ENCODE measurements at regions of chr16 and their contacts with region 1.

Region 1: DNA sequence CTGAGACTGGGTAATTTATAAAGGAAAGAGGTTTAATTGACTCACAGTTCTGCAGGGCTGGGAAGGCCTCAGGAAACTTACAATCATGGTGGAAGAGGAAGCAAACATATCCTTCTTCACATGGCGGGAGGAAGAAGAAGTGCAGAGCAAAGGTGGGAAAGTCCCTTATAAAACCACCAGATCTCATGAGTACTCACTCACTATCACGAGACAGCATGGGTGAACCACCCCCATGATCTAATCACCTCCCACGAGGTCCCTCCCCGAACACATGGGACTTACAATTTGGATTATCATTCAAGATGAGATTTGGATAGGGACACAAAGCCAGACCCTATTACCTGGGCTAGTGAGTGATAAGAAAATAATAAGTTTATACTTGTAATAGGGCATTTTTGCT is 70.6 kb upstream of the HS3ST2 start:
- DNase-seq: no peak
- ATAC-seq: no peak
- H3K4me3 ChIP-seq: no peak overlapping the region
- H3K4me1 ChIP-seq: no peaks in the 10 kb centered on the region
- CTCF ChIP-seq: no peak

Region 2: GRCh38 chr16:22797551-22797950 is 54.1 kb after region 1 on chr16:
- intact Hi-C with region 1: loop called in 1 of 2 experiments (anchors 10 kb)
- DNase-seq: no peak
- ATAC-seq: no peak
- H3K4me3 ChIP-seq: no peak overlapping the region
- H3K4me1 ChIP-seq: no peaks in the 10 kb centered on the region
- CTCF ChIP-seq: no peak

Region 3: DNA sequence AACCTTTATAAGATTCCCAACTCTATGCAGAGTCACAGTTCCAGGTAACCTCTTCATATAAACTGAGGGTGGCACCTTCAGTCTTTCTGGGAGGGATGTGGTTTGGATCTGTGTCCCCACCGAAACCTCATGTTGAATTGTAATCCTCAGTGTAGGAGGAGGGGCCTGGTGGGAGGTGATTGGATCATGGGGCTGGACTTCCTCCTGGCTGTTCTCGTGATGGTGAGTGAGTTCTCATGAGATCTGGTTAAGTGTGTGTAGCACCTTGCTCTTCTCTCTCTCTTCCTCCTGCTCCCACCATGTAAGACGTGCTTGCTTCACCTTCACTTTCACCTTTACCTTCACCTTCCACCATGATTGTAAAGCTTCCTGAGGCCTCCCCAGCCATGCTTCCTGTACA is 101.0 kb after region 1 on chr16:
- intact Hi-C with region 1: no loop called
- DNase-seq: no peak
- ATAC-seq: no peak
- H3K4me3 ChIP-seq: no peak overlapping the region
- H3K4me1 ChIP-seq: no peaks in the 10 kb centered on the region
- CTCF ChIP-seq: no peak

Measured in mucosa of descending colon (tissue), 3 donors.